GM13977 (cell line): ENCODE measurements at regions of chr4 and their contacts with region 1.

Region 1: GRCh38 chr4:105471566-105472176 is 2.2 kb downstream of the PPA2 start:
- DNase-seq: peak; percentile 71
- CTCF ChIP-seq: peak; percentile 65

Region 2: DNA sequence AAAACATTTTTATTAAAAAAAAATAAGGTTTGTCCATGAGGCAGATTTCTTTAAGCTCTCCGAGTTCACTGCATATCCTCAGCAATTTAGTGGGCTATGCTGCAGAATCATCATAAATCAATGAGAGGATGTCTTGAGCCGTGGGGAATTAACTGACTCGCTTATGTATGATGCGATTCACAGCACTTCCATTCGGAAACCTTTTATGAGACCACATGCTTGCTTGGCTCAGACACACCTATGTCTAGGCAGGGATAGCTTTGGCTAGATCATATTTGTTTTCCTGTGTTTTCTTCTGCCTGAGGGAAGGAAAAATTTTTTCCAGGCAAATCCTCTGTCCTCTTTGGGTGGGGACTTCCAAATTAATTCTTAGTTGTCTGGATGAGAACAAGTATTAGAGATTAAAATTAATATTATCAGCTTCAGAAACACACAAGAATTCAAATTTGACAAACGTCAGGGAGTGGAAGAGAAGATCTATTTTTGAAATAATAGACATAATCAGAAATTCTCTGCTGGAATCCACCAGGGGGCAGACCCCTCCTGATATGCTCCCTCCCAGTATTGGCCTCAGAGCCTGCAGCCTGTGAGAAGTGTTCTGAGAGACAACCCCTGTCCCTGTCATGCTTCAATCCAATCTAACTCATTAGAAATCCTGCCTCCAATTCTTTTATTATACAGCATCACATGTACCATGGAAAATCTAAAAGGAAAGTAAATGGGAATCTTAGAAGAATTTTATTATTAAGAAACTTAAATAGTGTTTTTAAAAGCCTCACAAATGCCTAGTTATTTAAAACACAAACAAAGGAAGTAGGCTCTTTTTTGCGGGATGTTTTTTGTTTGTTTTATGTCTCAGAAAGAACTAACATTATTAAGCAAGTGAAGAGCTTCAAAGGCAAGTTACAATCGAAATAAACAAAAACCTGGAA is 1406.8 kb before region 1 on chr4:
- in situ Hi-C with region 1: loop called (anchors 25 kb)
- DNase-seq: peak; percentile 13
- CTCF ChIP-seq: peak; percentile 60

Region 3: DNA sequence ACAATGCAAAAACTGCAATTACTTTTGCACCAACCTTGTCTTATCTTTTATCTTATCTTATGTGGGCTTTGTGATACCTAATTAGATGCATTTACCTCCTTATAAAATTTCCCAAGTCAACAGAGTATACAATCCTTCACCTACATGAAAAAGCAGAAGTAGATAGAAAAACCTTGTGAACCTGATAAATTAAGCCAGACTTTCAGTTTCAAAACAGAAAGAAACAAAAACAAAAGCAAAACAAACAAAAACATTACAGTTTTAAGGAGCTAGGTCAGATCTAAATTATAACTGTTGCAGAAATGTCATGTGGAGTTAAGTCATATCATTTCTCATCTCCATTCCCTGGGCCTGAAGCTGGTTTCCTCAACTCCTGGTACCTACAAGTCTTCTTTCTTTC is 952.1 kb before region 1 on chr4:
- in situ Hi-C with region 1: loop called (anchors 25 kb)
- DNase-seq: no peak
- CTCF ChIP-seq: no peak

Region 4: GRCh38 chr4:104728380-104729122 is 743.1 kb before region 1 on chr4:
- in situ Hi-C with region 1: loop called (anchors 25 kb)
- DNase-seq: no peak
- CTCF ChIP-seq: no peak

Region 5: DNA sequence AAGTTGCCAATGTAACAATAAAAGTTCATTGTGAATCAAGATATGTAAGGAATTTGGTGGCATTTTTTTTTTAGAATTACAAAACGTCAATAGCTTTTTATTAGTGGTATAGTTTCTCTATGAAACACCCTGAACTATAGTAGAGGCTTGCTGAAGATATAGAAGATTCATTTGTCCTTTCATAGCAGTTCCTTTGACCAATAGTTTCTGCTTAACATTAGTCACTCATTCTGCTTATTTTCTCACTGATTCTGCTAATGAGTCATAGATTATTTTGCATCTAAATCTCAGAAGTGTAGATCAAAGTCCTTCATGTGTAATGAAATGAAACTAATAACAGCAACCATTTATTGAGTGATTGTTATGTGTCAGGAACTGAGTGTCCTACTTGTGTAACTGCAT is 530.0 kb before region 1 on chr4:
- in situ Hi-C with region 1: loop called (anchors 25 kb)
- DNase-seq: peak; percentile 8
- CTCF ChIP-seq: no peak

Region 6: DNA sequence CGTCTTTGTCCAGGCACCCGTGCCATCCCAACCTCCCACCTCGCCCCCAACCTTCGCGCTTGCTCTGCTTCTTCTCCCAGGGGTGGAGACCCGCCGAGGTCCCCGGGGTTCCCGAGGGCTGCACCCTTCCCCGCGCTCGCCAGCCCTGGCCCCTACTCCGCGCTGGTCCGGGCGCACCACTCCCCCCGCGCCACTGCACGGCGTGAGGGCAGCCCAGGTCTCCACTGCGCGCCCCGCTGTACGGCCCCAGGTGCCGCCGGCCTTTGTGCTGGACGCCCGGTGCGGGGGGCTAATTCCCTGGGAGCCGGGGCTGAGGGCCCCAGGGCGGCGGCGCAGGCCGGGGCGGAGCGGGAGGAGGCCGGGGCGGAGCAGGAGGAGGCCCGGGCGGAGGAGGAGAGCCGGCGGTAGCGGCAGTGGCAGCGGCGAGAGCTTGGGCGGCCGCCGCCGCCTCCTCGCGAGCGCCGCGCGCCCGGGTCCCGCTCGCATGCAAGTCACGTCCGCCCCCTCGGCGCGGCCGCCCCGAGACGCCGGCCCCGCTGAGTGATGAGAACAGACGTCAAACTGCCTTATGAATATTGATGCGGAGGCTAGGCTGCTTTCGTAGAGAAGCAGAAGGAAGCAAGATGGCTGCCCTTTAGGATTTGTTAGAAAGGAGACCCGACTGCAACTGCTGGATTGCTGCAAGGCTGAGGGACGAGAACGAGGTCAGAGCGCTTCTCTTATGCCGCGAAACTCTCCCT is 325.2 kb before region 1 on chr4 and contains the start of gene TET2:
- in situ Hi-C with region 1: loop called (anchors 25 kb)
- DNase-seq: peak; percentile 87
- CTCF ChIP-seq: no peak